Activated CD8-positive, alpha-beta T cell treated with anti-CD3 and anti-CD28 coated beads for 36 hours (primary cell): ENCODE measurements at regions of chrX and their contacts with region 1.

Region 1: DNA sequence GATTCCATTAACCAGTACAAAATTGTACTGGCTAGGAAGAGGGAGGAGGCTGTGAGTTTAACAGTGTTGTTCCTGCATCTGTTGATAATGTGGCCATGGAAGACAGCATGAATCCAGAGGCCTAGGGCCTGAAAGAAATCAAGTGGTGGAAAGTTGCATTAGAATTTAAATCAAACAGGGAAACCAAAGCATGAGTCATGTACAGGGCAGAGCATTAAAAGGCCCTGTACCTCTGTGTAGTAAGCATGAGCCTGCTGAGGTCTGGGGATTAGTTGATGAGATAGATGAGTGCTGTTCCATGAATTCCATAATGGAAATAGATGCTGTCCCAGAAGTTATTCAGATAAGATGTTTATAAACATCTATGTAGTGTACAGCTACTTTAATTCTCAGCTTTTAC is 58.3 kb downstream of the MID1IP1 start:
- DNase-seq: no peak
- ATAC-seq: peak; percentile 47
- H3K4me3 Mint-ChIP-seq: no peak overlapping the region
- H3K27ac Mint-ChIP-seq: no peak overlapping the region
- H3K4me1 Mint-ChIP-seq: peaks cover 7% of the 10 kb centered on the region
- H3K27me3 Mint-ChIP-seq: no peaks in the 10 kb centered on the region
- CTCF ChIP-seq: no peak

Region 2: DNA sequence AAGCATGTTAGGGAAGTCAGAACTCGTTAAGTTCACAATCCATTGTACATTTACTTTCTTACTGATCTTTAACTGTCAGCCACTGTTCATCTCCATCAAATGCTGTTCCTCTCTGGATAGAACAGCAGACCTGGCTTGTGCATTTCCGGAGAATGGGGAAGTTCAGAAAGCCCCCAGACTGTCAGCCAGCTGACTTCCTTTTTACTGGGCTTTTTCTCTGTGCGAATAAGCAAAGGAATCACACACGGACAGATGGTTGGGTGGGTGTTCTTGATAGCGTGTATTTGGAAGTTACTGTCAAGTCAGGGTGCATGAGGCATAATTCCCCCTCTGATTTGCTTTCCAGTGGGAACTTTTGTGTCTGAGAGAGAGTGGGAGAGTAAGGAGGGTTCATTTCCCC is 241.4 kb before region 1 on chrX:
- CTCF ChIA-PET with region 1: no interaction called
- POLR2A ChIA-PET with region 1: no interaction called
- intact Hi-C with region 1: no loop called
- DNase-seq: no peak
- ATAC-seq: no peak
- H3K4me3 Mint-ChIP-seq: no peak overlapping the region
- H3K27ac Mint-ChIP-seq: no peak overlapping the region
- H3K4me1 Mint-ChIP-seq: peaks cover 3% of the 10 kb centered on the region
- H3K27me3 Mint-ChIP-seq: peaks cover 2% of the 10 kb centered on the region
- CTCF ChIP-seq: no peak

Region 3: GRCh38 chrX:38811515-38812243 is 47.9 kb before region 1 on chrX:
- CTCF ChIA-PET with region 1: no interaction called
- POLR2A ChIA-PET with region 1: no interaction called
- intact Hi-C with region 1: loop called (anchors 5 kb)
- DNase-seq: peak; percentile 39
- ATAC-seq: peak; percentile 72
- H3K4me3 Mint-ChIP-seq: peak overlapping the region; percentile 54
- H3K27ac Mint-ChIP-seq: peak overlapping the region; percentile 92
- H3K4me1 Mint-ChIP-seq: peaks cover 55% of the 10 kb centered on the region
- H3K27me3 Mint-ChIP-seq: no peaks in the 10 kb centered on the region
- CTCF ChIP-seq: no peak